ENCODE measurements at regions of chr1 and their contacts with region 1.

Region 1: DNA sequence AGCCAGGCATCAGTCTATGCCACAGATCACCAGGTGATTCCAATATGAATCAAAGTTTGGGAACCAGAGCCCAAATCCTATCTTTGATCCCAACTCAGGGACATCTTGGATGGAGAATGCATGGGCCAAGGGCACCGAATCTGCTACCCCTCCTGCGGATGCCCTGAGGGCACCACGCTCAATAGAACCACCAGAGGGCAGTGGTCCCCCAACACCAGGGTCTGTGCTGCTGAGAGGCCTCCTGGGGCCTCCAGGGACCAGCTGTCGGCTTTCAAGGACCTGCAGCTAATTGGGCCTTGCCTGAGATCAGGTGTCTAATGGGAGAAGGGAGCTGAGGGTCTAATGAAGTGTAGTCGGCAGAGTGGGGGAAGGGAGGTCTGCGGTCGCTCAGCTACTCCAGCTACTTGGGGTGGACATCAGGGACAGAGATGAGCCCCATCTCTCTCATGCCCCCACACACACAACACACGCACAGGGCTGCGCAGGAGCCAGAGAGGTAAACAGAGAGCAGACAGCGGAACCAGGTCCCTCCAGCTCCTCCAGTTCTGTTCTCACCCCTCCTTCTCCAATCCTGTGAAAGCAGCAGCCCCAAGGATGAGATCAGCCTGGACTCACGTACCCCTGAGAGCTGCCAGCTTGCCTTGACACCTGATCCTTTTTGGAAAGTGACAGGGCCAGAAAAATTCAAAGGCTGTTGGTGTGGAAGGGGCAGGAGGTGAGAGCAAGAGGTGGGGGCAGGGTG is 34.9 kb upstream of the PPP1R15B start:
- DNase-seq: peak; percentile 55
- ATAC-seq: peak; percentile 94
- H3K4me3 ChIP-seq: no peak overlapping the region
- H3K27ac ChIP-seq: no peak overlapping the region
- H3K4me1 ChIP-seq: peaks cover 12% of the 10 kb centered on the region
- H3K27me3 ChIP-seq: no peaks in the 10 kb centered on the region
- CTCF ChIP-seq: peak; percentile 82
- EP300 ChIP-seq: no peak
- POLR2A ChIP-seq: no peak
- RAD21 ChIP-seq: peak; percentile 82

Region 2: DNA sequence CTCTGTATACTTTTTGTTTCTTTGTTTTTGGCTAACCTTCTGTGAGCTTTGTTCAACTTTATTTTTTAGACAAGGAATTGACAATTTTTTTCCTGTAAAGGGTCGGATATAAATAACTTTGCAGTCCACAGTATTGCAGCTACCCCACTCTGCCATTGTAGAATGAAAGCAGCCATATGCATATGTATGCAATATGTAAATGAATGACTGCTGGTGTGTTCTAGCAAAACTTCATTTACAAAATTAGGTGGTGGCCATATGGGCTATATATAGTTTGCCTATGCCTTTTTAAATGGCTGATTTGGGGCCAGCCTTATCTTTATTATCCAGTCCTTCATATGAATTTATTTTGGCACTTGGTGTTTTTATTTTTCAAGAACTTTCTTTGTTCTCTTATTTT is 603.1 kb before region 1 on chr1:
- CTCF ChIA-PET with region 1: no interaction called
- POLR2A ChIA-PET with region 1: no interaction called
- in situ Hi-C with region 1: no loop called
- intact Hi-C with region 1: no loop called
- DNase-seq: no peak
- ATAC-seq: no peak
- H3K4me3 ChIP-seq: no peak overlapping the region
- H3K27ac ChIP-seq: no peak overlapping the region
- H3K4me1 ChIP-seq: no peaks in the 10 kb centered on the region
- H3K27me3 ChIP-seq: no peaks in the 10 kb centered on the region
- CTCF ChIP-seq: no peak
- EP300 ChIP-seq: no peak
- POLR2A ChIP-seq: no peak
- RAD21 ChIP-seq: no peak

Region 3: DNA sequence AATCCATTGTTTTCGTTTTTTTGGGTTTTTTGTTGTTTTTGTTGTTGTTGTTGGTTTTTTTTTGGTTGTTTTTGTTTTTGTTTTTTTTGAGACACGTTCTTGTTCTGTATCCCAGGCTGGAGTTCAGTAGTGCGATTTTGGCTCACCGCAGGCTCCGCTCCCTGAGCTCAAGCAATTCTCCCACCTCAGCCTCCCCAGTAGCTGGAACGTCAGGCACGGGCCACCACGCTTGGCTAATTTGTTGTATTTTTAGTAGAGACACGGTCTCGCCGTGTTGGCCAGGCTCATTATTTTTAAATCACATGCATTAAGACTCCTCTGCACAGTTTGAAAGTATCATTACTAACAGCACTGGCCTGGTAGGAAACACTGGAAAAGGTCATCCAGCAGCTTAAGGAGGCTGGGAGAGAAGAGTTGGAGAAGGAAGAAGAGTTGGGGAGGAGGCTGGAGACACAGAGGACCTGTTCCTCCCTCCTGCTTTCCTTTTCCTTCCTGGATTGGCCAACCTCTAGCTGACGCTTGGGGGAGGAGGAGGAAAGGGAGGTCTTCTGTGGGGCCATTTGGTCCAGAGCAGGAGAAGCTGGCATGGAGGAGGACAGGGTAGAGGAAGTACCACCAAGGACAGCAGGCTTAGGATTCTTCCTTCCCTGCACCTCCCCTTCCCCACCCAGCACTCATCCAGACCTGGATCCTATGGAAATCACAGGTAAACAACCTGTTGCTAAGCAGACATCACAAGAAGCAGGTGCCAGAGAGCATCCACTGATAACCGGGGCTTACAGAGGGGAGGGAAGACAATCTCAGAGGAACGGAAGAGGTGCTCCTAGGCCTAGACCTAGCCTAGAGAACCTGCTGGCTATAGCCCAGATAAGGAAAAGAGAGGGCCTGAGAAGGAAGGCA is 160.9 kb before region 1 on chr1:
- CTCF ChIA-PET with region 1: no interaction called
- POLR2A ChIA-PET with region 1: no interaction called
- in situ Hi-C with region 1: no loop called
- intact Hi-C with region 1: no loop called
- DNase-seq: no peak
- ATAC-seq: no peak
- H3K4me3 ChIP-seq: no peak overlapping the region
- H3K27ac ChIP-seq: no peak overlapping the region
- H3K4me1 ChIP-seq: peaks cover 47% of the 10 kb centered on the region
- H3K27me3 ChIP-seq: no peaks in the 10 kb centered on the region
- CTCF ChIP-seq: no peak
- EP300 ChIP-seq: no peak
- POLR2A ChIP-seq: no peak
- RAD21 ChIP-seq: no peak

Region 4: DNA sequence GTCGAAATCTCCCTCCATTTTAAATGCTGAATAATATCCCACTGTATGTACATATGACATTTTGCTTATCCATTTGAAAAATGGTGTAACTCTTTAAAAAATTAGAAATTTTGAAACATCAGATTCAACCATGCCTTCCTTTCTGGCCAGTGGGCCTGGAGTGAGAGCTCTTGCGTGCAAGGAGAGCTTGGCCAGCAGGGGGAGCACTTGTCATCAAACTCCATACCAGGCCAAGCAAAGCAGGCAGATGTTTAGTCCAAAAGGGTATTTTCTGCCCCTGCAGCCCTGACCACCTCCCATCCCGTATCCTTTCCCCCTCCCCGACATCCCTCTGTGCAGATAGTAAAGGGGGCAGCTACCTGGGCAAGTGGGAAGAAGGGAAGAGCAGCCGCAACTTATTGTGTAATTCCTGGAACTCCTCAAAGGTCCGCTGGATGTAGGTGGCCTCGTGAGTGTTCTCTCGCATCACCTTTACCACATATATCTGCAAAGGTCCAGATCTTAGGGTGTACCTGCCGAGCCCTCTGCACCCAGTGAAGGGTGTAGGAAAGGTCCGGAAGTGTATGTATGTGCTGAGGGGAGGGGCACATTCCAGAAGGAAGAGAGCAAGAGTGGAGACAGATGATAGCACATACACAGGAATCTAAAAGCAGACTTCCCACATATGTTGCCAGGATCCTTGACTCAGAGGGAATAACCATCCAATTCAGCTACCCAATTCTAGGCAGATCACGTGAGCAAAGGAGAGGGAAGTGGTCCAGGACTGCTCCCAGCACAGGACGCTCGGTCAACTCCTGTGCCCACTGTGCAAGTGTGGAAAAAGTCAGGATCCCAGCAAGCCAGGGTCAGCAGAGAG is 15.0 kb before region 1 on chr1:
- CTCF ChIA-PET with region 1: interaction called, 3 read pairs
- POLR2A ChIA-PET with region 1: interaction called, 3 read pairs
- in situ Hi-C with region 1: no loop called
- intact Hi-C with region 1: loop called (anchors 2 kb)
- DNase-seq: peak; percentile 52
- ATAC-seq: peak; percentile 92
- H3K4me3 ChIP-seq: no peak overlapping the region
- H3K27ac ChIP-seq: no peak overlapping the region
- H3K4me1 ChIP-seq: peaks cover 16% of the 10 kb centered on the region
- H3K27me3 ChIP-seq: no peaks in the 10 kb centered on the region
- CTCF ChIP-seq: peak; percentile 84
- EP300 ChIP-seq: no peak
- POLR2A ChIP-seq: no peak
- RAD21 ChIP-seq: no peak

Region 5: GRCh38 chr1:204465546-204466415 is 19.2 kb after region 1 on chr1:
- CTCF ChIA-PET with region 1: no interaction called
- POLR2A ChIA-PET with region 1: no interaction called
- in situ Hi-C with region 1: no loop called
- intact Hi-C with region 1: no loop called
- DNase-seq: no peak
- ATAC-seq: no peak
- H3K4me3 ChIP-seq: no peak overlapping the region
- H3K27ac ChIP-seq: no peak overlapping the region
- H3K4me1 ChIP-seq: no peaks in the 10 kb centered on the region
- H3K27me3 ChIP-seq: no peaks in the 10 kb centered on the region
- CTCF ChIP-seq: no peak
- EP300 ChIP-seq: no peak
- POLR2A ChIP-seq: no peak
- RAD21 ChIP-seq: no peak

Region 6: GRCh38 chr1:204475656-204476432 is 29.3 kb after region 1 on chr1:
- CTCF ChIA-PET with region 1: no interaction called
- POLR2A ChIA-PET with region 1: no interaction called
- in situ Hi-C with region 1: no loop called
- intact Hi-C with region 1: no loop called
- DNase-seq: no peak
- ATAC-seq: no peak
- H3K4me3 ChIP-seq: no peak overlapping the region
- H3K27ac ChIP-seq: no peak overlapping the region
- H3K4me1 ChIP-seq: peaks cover 13% of the 10 kb centered on the region
- H3K27me3 ChIP-seq: no peaks in the 10 kb centered on the region
- CTCF ChIP-seq: no peak
- EP300 ChIP-seq: no peak
- POLR2A ChIP-seq: no peak
- RAD21 ChIP-seq: no peak

Measured in HepG2 (cell line).